Cardiac septum (tissue), 1 donor: ENCODE measurements at regions of chr16 and their contacts with region 1.

Region 1: DNA sequence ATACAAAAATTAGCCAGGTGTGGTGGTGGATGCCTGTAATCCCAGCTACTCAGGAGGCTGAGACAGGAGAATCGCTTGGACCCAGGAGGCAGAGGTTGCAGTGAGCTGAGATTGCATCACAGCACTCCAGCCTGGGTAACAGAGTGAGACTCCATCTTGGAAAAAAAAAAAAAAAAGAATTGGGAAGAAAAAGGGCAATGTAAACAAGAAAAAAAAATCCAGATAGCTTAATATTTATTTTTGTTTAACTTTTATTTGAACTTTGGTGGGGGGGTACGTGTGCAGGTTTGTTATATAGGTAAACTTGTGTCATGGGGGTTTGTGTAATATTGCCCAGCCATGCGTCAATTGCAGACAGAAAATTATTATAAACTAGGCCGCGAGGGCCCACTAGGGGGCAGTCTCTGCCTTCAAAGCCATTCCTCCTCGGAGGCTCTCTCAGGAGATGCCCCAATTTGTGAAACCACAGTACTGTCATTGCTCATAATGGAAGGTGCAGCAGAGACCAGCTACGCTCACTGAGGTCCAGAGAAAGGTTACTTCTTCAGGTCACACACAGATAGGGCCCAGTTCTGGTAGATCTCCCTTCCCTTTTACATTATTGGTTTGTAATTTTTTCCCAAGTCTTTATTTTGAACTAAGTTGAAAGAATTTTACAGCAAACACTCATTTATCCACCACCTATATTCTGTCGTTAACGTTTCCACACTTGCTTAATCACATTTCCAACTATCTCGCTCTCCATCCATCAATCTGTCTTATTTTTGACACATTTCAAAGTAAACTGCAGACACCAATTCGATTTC is 206.2 kb downstream of the PRKCB start:
- DNase-seq: peak; percentile 78

Region 2: DNA sequence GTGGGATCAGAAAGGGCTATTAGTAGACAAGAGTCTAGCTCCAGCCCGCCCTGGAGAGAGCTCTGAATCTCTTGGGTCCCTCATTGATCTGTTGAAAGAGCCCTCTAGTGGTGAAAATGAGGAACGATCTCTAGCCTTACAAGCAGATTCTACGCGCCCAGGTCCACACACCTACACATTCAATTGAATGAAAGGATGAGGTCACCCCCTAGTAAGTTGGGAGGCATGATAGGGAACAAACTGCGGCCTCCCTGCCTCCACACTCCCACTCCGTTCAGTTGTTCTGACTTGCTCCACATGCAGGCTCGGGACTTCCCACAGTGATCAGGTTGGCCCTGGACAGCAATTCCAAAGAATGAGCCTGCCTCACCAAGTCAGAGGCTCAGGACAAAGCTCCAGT is 211.2 kb after region 1 on chr16:
- intact Hi-C with region 1: loop called (anchors 10 kb)
- DNase-seq: no peak

Region 3: GRCh38 chr16:24499193-24499814 is 457.3 kb after region 1 on chr16:
- intact Hi-C with region 1: loop called (anchors 2 kb)
- DNase-seq: no peak